Transverse colon (tissue), 4 donors: ENCODE measurements at regions of chr13 and their contacts with region 1.

Region 1: GRCh38 chr13:37602747-37603381 is 4.3 kb upstream of the POSTN start:
- DNase-seq: no peak
- H3K4me3 ChIP-seq: no peak overlapping the region
- H3K27ac ChIP-seq: no peak overlapping the region
- H3K4me1 ChIP-seq: no peaks in the 10 kb centered on the region
- H3K27me3 ChIP-seq: no peaks in the 10 kb centered on the region
- CTCF ChIP-seq: peak in 4 of 5 experiments; percentile 24 to 44 (median 34)
- EP300 ChIP-seq: no peak
- POLR2A ChIP-seq: no peak

Region 2: DNA sequence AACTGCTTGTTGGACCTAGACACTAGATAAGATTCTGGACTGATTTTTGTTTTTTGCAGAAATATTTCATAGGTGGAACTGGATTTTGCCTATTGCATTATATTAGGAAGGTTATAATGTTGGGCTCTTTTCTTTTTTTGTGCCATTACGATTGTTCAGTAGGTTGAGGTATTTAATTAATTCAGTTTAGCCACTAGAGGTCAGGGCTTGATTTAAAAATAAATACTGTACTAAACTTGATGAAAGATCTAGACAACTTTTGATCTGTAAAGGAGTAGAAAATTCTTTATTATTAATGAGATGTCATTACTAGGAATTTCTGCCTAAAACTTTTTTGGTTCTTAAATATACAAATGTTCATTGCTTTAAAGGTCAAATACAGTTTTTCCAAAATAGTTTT is 528.2 kb before region 1 on chr13:
- in situ Hi-C with region 1: loop called in 1 of 4 experiments (anchors 25 kb)
- intact Hi-C with region 1: loop called (anchors 10 kb)
- DNase-seq: no peak
- H3K4me3 ChIP-seq: no peak overlapping the region
- H3K27ac ChIP-seq: no peak overlapping the region
- H3K4me1 ChIP-seq: no peaks in the 10 kb centered on the region
- H3K27me3 ChIP-seq: no peaks in the 10 kb centered on the region
- CTCF ChIP-seq: peak; percentile 11 to 41 (median 30)
- EP300 ChIP-seq: no peak
- POLR2A ChIP-seq: no peak

Region 3: DNA sequence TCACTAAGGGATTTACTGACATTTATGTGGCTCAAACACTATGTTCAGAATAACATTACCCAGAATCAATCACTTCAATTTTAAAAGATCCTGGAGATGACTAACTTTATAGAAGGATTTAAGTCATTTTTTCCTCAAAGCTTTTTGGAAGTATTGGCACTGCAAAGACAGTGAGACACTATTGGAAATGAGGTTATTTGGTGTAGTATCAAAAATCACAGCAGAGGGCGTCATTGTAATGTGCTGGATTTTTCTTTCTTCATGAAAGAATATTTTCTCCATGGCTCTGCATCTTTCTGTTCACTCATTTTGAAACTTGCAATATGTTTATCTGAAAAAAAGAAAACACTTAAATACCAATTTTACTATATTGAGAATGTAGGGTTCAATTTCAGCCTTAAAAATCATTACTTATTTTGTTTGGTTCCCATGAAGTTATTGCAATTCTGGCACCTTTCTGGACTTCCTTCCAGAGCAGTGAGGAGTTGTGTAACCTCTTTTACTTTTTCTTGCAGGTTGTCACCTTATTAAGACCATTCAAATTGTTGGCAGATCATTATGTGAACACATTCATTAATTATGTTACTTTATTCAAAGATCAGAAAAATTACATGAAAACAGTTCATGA is 493.7 kb before region 1 on chr13:
- in situ Hi-C with region 1: loop called in 2 of 4 experiments (anchors 10 to 25 kb)
- intact Hi-C with region 1: loop called (anchors 10 kb)
- DNase-seq: no peak
- H3K4me3 ChIP-seq: no peak overlapping the region
- H3K27ac ChIP-seq: no peak overlapping the region
- H3K4me1 ChIP-seq: peaks cover 0 to 3% (median 0%) of the 10 kb centered on the region in 4 donors
- H3K27me3 ChIP-seq: no peaks in the 10 kb centered on the region
- CTCF ChIP-seq: peak; percentile 35 to 52 (median 36)
- EP300 ChIP-seq: no peak
- POLR2A ChIP-seq: no peak

Region 4: DNA sequence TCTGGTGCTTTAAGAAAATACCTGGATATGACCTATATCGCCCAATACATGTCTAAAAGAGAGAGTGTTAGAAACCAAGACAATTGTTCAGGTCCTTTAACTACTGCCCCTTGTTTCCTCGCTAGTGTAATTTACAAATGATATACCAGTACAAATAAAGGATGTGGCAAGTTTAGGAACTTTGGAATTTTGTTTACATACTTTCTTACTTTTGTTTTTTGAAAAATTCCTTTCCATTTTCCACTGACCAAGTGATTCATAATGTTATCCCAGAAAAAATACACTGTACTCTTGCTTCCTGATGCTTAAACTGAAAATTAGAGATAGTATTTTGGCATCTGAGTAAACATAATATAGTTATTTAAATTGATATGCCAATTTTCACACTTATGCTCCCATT is 400.6 kb before region 1 on chr13:
- in situ Hi-C with region 1: no loop called
- intact Hi-C with region 1: no loop called
- DNase-seq: no peak
- H3K4me3 ChIP-seq: no peak overlapping the region
- H3K27ac ChIP-seq: no peak overlapping the region
- H3K4me1 ChIP-seq: no peaks in the 10 kb centered on the region
- H3K27me3 ChIP-seq: no peaks in the 10 kb centered on the region
- CTCF ChIP-seq: no peak
- EP300 ChIP-seq: no peak
- POLR2A ChIP-seq: no peak

Region 5: DNA sequence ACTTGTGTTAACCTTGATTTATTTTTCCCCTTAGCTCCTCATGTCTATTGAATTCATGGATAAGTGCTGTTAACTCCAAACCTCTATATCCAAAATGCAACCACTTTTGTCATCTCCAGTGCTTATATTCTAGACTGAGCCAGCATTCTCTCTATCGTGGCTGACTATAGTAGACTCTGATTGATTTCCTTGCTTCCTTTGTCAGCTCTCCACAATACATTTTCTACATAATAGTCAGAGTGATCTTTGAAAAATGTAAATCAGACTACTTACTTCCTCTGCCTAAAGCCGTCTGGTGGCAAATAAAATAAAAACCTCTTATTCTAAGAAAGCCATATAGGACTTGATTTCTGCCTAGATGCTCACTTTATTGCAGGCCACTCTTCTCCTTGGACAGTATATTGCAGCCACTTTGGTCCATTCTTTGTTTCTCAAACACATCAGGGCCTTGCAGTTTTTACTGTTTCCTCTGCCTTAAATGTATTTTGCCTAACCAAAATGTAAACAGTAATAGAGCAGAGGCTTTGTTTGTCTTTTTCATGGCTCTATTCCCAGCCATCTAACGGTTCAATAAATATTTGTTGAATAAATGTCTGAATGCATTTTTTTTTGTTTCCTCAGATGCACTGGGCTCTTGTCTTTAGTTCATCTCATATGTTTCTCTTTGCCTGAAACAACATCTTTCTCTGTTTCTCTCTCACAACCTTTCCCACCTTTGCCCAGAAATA is 253.8 kb before region 1 on chr13:
- in situ Hi-C with region 1: no loop called
- intact Hi-C with region 1: loop called (anchors 10 kb)
- DNase-seq: no peak
- H3K4me3 ChIP-seq: no peak overlapping the region
- H3K27ac ChIP-seq: no peak overlapping the region
- H3K4me1 ChIP-seq: no peaks in the 10 kb centered on the region
- H3K27me3 ChIP-seq: no peaks in the 10 kb centered on the region
- CTCF ChIP-seq: no peak
- EP300 ChIP-seq: no peak
- POLR2A ChIP-seq: no peak

Region 6: GRCh38 chr13:37403776-37404528 is 198.9 kb before region 1 on chr13:
- in situ Hi-C with region 1: no loop called
- intact Hi-C with region 1: no loop called
- DNase-seq: no peak
- H3K4me3 ChIP-seq: no peak overlapping the region
- H3K27ac ChIP-seq: no peak overlapping the region
- H3K4me1 ChIP-seq: no peaks in the 10 kb centered on the region
- H3K27me3 ChIP-seq: no peaks in the 10 kb centered on the region
- CTCF ChIP-seq: no peak
- EP300 ChIP-seq: no peak
- POLR2A ChIP-seq: no peak